ENCODE measurements at regions of chr15 and their contacts with region 1.

Region 1: GRCh38 chr15:57527382-57528091 is 64.2 kb upstream of the MYZAP start:
- DNase-seq: peak; percentile 88
- ATAC-seq: peak; percentile 99
- H3K4me3 ChIP-seq: no peak overlapping the region
- H3K4me3 Mint-ChIP-seq: no peak overlapping the region
- H3K27ac ChIP-seq: no peak overlapping the region
- H3K27ac Mint-ChIP-seq: no peak overlapping the region
- H3K4me1 ChIP-seq: peaks cover 6 to 10% of the 10 kb centered on the region in 2 donors
- H3K4me1 Mint-ChIP-seq: peaks cover 15% of the 10 kb centered on the region
- H3K27me3 ChIP-seq: no peaks in the 10 kb centered on the region
- H3K27me3 Mint-ChIP-seq: no peaks in the 10 kb centered on the region
- CTCF ChIP-seq: peak; percentile 80

Region 2: GRCh38 chr15:56491110-56491722 is 1036.3 kb before region 1 on chr15:
- CTCF ChIA-PET with region 1: interaction called, 108 read pairs
- POLR2A ChIA-PET with region 1: no interaction called
- intact Hi-C with region 1: loop called (anchors 1 kb)
- DNase-seq: peak; percentile 75
- ATAC-seq: peak; percentile 81
- H3K4me3 ChIP-seq: no peak overlapping the region
- H3K4me3 Mint-ChIP-seq: no peak overlapping the region
- H3K27ac ChIP-seq: no peak overlapping the region
- H3K27ac Mint-ChIP-seq: no peak overlapping the region
- H3K4me1 ChIP-seq: no peaks in the 10 kb centered on the region
- H3K4me1 Mint-ChIP-seq: no peaks in the 10 kb centered on the region
- H3K27me3 ChIP-seq: no peaks in the 10 kb centered on the region
- H3K27me3 Mint-ChIP-seq: no peaks in the 10 kb centered on the region
- CTCF ChIP-seq: peak; percentile 90

Region 3: DNA sequence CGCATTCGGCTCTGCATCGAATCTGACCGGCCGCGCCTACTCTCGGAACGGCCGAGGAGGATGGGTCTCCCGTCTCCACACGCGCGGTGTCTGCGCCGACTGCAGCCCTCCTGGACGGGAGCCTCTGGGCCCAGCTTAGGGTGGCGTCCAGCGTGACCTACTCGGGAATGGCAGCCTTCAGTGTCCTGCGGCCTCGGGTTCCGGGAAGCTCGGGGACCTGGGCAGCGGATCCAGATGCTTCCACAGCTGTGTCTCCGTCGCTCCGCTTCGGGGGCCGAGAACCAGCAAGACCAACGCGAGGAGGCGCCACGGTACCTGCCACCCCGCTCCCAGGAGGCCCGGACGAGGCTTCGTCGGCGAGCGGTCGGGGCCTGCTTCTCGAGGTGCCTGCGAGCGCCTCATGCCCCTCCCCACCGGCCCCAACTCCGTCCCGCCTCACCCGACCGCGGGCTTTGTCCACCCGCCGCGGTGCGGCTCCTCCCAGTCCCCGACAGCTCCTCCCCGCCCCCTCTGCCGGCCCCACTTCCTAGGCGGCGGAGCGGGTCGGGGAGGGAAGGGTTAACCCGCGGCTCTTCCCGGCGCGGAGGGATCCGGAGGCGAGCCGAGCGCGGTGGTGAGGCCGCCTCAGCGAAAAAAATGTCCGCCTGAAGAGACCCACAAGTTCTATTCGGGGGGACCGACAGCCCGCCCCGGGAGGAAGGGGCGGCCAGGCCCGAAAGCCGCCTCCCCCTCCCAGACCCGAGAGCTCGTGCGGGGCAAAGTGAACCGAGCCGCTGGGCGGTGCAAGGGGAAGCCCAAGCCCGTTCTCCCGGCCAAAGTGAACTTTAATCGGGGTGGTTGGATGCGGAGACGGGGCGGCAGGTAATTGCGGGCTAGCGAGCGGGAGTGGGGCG is 609.2 kb before region 1 on chr15 and contains the start of gene TCF12:
- CTCF ChIA-PET with region 1: interaction called, 6 read pairs
- POLR2A ChIA-PET with region 1: no interaction called
- intact Hi-C with region 1: loop called (anchors 1 kb)
- DNase-seq: peak; percentile 97
- ATAC-seq: peak; percentile 74
- H3K4me3 ChIP-seq: peak within 1 kb of the TSS; percentile 80 to 92 (median 89)
- H3K4me3 Mint-ChIP-seq: peak within 1 kb of the TSS; percentile 93
- H3K27ac ChIP-seq: peak within 1 kb of the TSS; percentile 79 to 86
- H3K27ac Mint-ChIP-seq: peak within 1 kb of the TSS; percentile 92
- H3K4me1 ChIP-seq: peaks cover 19 to 21% of the 10 kb centered on the region in 2 donors
- H3K4me1 Mint-ChIP-seq: peaks cover 32% of the 10 kb centered on the region
- H3K27me3 ChIP-seq: no peaks in the 10 kb centered on the region
- H3K27me3 Mint-ChIP-seq: no peaks in the 10 kb centered on the region
- CTCF ChIP-seq: peak; percentile 59
- total RNA-seq, gene TCF12: 131 TPM in 2 replicates

Region 4: GRCh38 chr15:57133127-57133968 is 394.2 kb before region 1 on chr15:
- CTCF ChIA-PET with region 1: interaction called, 10 read pairs
- POLR2A ChIA-PET with region 1: no interaction called
- intact Hi-C with region 1: no loop called
- DNase-seq: peak; percentile 43
- ATAC-seq: peak; percentile 49
- H3K4me3 ChIP-seq: no peak overlapping the region
- H3K4me3 Mint-ChIP-seq: peak overlapping the region; percentile 55
- H3K27ac ChIP-seq: no peak overlapping the region
- H3K27ac Mint-ChIP-seq: no peak overlapping the region
- H3K4me1 ChIP-seq: peaks cover 6 to 14% of the 10 kb centered on the region in 2 donors
- H3K4me1 Mint-ChIP-seq: peaks cover 36% of the 10 kb centered on the region
- H3K27me3 ChIP-seq: no peaks in the 10 kb centered on the region
- H3K27me3 Mint-ChIP-seq: no peaks in the 10 kb centered on the region
- CTCF ChIP-seq: no peak

Region 5: DNA sequence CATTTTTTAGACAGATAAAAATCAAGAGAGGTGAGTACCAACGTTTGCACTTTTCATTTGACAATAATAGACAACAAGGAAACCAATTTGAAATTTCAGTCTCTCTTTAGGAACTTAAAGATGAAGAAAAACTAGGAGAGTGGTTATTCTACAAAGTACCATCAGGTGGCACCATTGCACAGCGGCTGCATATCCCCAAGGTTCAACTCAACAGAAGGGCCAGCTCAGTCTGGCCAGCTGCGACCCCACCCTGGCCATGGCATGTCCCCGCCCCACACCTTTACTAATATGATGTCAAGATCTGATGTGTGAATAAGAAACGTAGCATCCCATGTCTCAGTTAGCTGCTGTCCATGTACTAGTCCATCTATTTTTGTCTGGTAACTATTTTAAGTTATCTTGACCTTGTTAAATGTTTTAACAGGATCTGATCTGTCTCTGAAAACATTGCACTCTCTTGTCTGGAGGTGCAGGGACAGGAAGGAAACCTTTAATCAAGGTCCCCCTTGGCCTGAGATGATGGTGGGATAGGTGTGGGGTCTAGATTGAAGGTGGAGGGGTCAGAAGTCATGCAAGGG is 186.8 kb before region 1 on chr15:
- CTCF ChIA-PET with region 1: interaction called, 288 read pairs
- POLR2A ChIA-PET with region 1: no interaction called
- intact Hi-C with region 1: loop called (anchors 1 kb)
- DNase-seq: peak; percentile 70
- ATAC-seq: peak; percentile 67
- H3K4me3 ChIP-seq: no peak overlapping the region
- H3K4me3 Mint-ChIP-seq: no peak overlapping the region
- H3K27ac ChIP-seq: no peak overlapping the region
- H3K27ac Mint-ChIP-seq: no peak overlapping the region
- H3K4me1 ChIP-seq: no peaks in the 10 kb centered on the region
- H3K4me1 Mint-ChIP-seq: no peaks in the 10 kb centered on the region
- H3K27me3 ChIP-seq: no peaks in the 10 kb centered on the region
- H3K27me3 Mint-ChIP-seq: peaks cover 12% of the 10 kb centered on the region
- CTCF ChIP-seq: peak; percentile 96

Region 6: GRCh38 chr15:57541805-57542504 is 14.4 kb after region 1 on chr15:
- CTCF ChIA-PET with region 1: interaction called, 63 read pairs
- POLR2A ChIA-PET with region 1: no interaction called
- intact Hi-C with region 1: no loop called
- DNase-seq: peak; percentile 58
- ATAC-seq: no peak
- H3K4me3 ChIP-seq: no peak overlapping the region
- H3K4me3 Mint-ChIP-seq: no peak overlapping the region
- H3K27ac ChIP-seq: no peak overlapping the region
- H3K27ac Mint-ChIP-seq: no peak overlapping the region
- H3K4me1 ChIP-seq: no peaks in the 10 kb centered on the region
- H3K4me1 Mint-ChIP-seq: no peaks in the 10 kb centered on the region
- H3K27me3 ChIP-seq: peaks cover 0 to 5% (median 0%) of the 10 kb centered on the region in 4 experiments
- H3K27me3 Mint-ChIP-seq: peaks cover 41% of the 10 kb centered on the region
- CTCF ChIP-seq: peak; percentile 79

Measured in B cell (primary cell).